Mammary epithelial cell (primary cell): ENCODE measurements at regions of chr1 and their contacts with region 1.

Region 1: DNA sequence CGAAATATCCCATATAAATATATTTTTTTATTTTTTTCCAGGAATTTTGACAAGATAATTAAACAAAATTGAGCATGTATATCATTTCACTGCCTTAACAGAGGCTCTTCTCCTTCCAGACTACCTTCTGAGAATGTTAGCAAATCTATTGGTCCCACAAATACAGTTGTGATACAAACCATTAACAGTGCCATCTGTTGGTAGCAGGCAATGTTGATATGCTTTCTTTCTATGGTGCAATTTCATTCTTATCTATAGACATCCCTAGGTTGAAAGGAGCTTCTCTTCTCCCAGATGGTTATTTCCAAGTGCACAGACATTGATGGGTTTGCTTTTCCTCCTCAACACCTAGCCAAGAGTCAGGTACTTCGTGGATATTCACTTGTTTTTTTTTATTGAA is 303.6 kb downstream of the USH2A start:
- DNase-seq: peak; percentile 12
- H3K4me3 ChIP-seq: no peak overlapping the region
- H3K27ac ChIP-seq: no peak overlapping the region
- H3K4me1 ChIP-seq: no peaks in the 10 kb centered on the region
- H3K27me3 ChIP-seq: no peaks in the 10 kb centered on the region
- CTCF ChIP-seq: peak; percentile 62 to 76

Region 2: GRCh38 chr1:215710036-215710898 is 409.3 kb before region 1 on chr1:
- CTCF ChIA-PET with region 1: interaction called, 4 read pairs
- dilution Hi-C with region 1: no loop called
- in situ Hi-C with region 1: no loop called
- intact Hi-C with region 1: loop called (anchors 1 kb)
- DNase-seq: peak; percentile 43
- H3K4me3 ChIP-seq: no peak overlapping the region
- H3K27ac ChIP-seq: no peak overlapping the region
- H3K4me1 ChIP-seq: no peaks in the 10 kb centered on the region
- H3K27me3 ChIP-seq: no peaks in the 10 kb centered on the region
- CTCF ChIP-seq: peak; percentile 68 to 84

Region 3: GRCh38 chr1:215824245-215824644 is 295.4 kb before region 1 on chr1:
- CTCF ChIA-PET with region 1: no interaction called
- dilution Hi-C with region 1: no loop called
- in situ Hi-C with region 1: no loop called
- intact Hi-C with region 1: loop called (anchors 5 kb)
- DNase-seq: no peak
- H3K4me3 ChIP-seq: no peak overlapping the region
- H3K27ac ChIP-seq: no peak overlapping the region
- H3K4me1 ChIP-seq: no peaks in the 10 kb centered on the region
- H3K27me3 ChIP-seq: peaks cover 2% of the 10 kb centered on the region
- CTCF ChIP-seq: peak; percentile 2 to 29

Region 4: GRCh38 chr1:215992620-215993019 is 127.0 kb before region 1 on chr1:
- CTCF ChIA-PET with region 1: no interaction called
- dilution Hi-C with region 1: no loop called
- in situ Hi-C with region 1: no loop called
- intact Hi-C with region 1: loop called (anchors 5 kb)
- DNase-seq: peak; percentile 8
- H3K4me3 ChIP-seq: no peak overlapping the region
- H3K27ac ChIP-seq: no peak overlapping the region
- H3K4me1 ChIP-seq: no peaks in the 10 kb centered on the region
- H3K27me3 ChIP-seq: peaks cover 2% of the 10 kb centered on the region
- CTCF ChIP-seq: peak; percentile 27 to 47

Region 5: DNA sequence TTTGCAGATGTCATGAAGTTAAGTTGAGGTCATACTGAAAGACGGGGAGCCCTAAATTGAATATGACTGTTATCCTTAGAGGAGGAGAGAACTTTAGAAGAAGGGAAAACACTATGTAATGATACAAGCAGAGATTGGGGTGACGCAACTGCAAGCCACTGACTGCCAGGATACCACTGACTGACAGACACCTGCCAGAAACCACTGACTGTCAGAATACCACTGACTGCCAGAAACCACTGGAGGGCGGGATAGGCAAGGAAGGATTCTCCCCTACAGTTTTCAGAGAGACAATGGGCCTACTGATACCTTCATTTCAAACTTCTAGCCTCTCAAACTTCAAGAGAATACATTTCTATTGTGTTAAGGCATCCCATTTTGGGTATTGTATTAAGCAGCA is 85.1 kb before region 1 on chr1:
- CTCF ChIA-PET with region 1: no interaction called
- dilution Hi-C with region 1: no loop called
- in situ Hi-C with region 1: no loop called
- intact Hi-C with region 1: loop called (anchors 1 kb)
- DNase-seq: peak; percentile 11
- H3K4me3 ChIP-seq: no peak overlapping the region
- H3K27ac ChIP-seq: no peak overlapping the region
- H3K4me1 ChIP-seq: no peaks in the 10 kb centered on the region
- H3K27me3 ChIP-seq: no peaks in the 10 kb centered on the region
- CTCF ChIP-seq: peak; percentile 27 to 60

Region 6: GRCh38 chr1:216221260-216221700 is 101.7 kb after region 1 on chr1:
- CTCF ChIA-PET with region 1: no interaction called
- dilution Hi-C with region 1: no loop called
- in situ Hi-C with region 1: no loop called
- intact Hi-C with region 1: loop called (anchors 10 kb)
- DNase-seq: peak; percentile 67
- H3K4me3 ChIP-seq: peak overlapping the region; percentile 44 to 56 (median 51)
- H3K27ac ChIP-seq: no peak overlapping the region
- H3K4me1 ChIP-seq: no peaks in the 10 kb centered on the region
- H3K27me3 ChIP-seq: no peaks in the 10 kb centered on the region
- CTCF ChIP-seq: peak; percentile 70 to 80

Region 7: GRCh38 chr1:216616425-216616824 is 496.8 kb after region 1 on chr1:
- CTCF ChIA-PET with region 1: no interaction called
- dilution Hi-C with region 1: no loop called
- in situ Hi-C with region 1: no loop called
- intact Hi-C with region 1: no loop called
- DNase-seq: no peak
- H3K4me3 ChIP-seq: no peak overlapping the region
- H3K27ac ChIP-seq: no peak overlapping the region
- H3K4me1 ChIP-seq: no peaks in the 10 kb centered on the region
- H3K27me3 ChIP-seq: no peaks in the 10 kb centered on the region
- CTCF ChIP-seq: no peak